ENCODE measurements at regions of chr22 and their contacts with region 1.

Region 1: DNA sequence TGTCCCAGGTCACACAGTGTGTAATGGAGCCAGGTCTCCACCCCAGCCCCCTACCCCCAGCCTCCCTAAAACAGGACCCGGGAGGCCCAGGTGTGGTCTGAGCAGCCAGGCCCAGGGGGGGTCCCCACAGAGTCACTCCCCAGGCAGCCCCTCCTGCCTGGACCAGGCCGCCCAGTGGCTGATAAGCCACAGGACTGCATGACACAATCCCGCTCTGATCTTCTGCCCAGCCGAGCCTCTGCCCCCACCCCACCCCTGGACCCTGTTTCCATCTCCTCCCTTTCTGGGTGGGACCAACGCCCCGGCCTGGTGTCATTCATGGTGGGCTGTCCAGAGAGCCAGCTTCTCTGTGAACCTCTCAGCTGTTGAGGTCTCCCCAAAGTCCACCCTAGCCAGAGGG is 7.8 kb upstream of the LIF start:
- DNase-seq: no peak
- ATAC-seq: no peak

Region 2: DNA sequence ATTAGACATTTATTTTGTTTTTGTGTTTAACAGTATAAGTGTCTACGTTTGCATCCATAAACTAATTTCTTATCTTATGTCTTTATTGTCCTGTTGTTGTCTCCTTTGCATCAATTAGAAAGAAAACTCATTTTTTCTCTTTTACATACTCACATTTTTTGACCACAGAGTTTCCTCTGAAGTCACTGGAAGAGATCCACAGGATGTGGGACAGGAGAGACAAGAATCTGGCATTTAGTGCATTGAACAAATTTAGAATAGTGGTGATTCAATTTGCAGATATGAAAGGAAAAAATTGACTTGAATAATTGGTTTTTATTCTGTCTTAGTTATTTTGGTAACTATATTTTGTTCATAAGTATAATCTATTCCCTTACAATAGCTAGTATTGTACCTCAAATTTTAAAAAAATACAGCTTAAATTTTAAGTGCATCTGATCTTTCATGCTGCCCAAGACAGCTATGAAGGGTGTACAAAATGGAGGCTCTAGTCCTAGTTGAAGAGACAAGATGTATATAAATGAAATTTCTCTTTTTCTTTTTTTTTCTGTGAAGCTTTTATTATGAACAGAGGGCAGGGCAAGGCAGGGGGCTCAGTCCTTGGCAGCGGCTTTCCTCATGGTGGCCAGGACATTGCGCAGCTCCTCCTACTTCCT is 149.7 kb before region 1 on chr22:
- intact Hi-C with region 1: loop called in 1 of 2 experiments (anchors 2 kb)
- DNase-seq: no peak
- ATAC-seq: no peak

Region 3: GRCh38 chr22:30289134-30289979 is 35.0 kb after region 1 on chr22 and contains the start of gene CASTOR1:
- intact Hi-C with region 1: no loop called
- DNase-seq: peak; percentile 99
- ATAC-seq: peak; percentile 89 to 91
- total RNA-seq, gene CASTOR1: 7.4 to 9.4 TPM

Measured in left cardiac atrium (tissue), 4 donors.